A673 (cell line): ENCODE measurements at regions of chr7 and their contacts with region 1.

Region 1: DNA sequence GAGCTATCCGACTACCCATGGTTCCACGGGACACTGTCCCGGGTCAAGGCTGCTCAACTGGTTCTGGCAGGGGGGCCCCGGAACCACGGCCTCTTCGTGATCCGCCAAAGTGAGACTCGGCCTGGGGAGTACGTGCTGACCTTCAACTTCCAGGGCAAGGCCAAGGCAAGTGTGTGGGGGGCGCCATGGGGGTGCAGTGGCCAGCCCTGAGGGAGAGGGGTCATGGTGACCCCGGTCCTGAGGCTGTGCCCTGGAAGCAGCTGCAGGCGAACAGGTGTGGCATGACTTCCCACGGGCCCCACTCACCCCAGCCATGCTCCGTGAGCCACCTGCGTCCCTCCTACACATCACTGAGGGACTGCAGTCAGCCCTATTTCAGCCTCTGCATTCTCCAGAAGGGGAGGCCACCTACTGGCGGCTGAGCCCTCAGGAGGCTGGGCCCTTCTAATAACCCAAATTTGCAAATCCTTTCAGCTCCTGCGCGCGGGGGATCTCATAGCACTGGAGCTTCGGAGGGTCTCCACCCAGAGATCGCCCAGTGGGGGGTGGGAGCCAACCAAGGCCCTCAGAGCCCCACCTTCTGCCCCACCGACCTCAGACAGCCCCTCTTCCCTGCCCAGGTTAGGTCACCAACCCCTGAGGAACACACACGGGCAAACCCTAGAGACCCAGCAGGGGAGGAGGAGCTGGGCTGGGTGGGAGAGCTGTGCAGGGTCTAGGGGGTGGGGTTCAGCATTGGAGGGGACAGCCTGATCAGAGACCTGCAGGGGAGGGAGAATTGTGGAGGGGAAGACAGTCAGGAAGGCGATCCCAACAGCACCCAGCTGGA is 30.8 kb downstream of the SH2B2 start:
- DNase-seq: no peak
- H3K4me3 ChIP-seq: no peak overlapping the region
- H3K27ac ChIP-seq: no peak overlapping the region
- H3K4me1 ChIP-seq: no peaks in the 10 kb centered on the region
- H3K27me3 ChIP-seq: no peaks in the 10 kb centered on the region
- CTCF ChIP-seq: no peak

Region 2: DNA sequence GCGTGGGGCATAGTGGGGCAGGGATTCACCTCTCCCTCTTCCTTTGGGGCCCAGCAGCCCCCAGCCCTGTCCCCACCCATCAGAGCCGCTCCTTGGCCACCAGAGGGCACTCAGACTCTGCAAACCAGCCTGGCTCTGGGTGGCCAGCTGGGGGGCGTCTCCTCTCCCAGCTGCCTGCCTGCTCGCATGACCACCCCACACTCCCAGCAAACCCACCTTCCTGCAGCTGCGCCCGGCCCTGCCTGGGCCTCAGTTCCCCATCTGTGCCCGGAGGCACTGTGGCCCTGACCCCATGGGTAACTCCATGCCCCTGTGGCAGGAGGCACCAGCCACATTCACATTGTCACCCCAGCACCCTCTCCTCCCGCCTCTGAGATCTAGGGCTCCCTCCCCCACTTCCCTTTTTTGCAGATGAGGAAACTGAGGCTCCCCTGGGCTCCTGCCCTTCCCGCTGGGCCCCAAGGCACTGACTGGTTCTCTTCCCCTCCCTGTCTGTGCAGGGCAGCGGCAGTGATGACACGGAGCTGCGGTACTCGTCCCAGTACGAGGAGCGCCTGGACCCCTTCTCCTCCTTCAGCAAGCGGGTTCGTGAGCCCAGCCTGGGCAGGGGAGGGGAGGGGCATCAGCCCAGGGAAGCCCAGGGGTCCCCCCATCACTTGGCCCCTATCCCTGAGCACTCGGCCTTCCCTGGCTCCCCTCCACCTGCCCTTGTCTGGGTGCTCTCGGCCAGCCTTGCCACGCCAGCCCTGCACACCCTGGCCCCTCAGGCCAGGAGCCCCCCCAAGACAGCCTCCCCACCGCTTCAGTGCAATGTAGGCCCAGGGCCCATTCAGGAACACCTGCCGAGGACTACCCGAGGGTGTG is 37.7 kb before region 1 on chr7:
- CTCF ChIA-PET with region 1: no interaction called
- POLR2A ChIA-PET with region 1: no interaction called
- intact Hi-C with region 1: no loop called
- DNase-seq: peak; percentile 85
- H3K4me3 ChIP-seq: no peak overlapping the region
- H3K27ac ChIP-seq: no peak overlapping the region
- H3K4me1 ChIP-seq: no peaks in the 10 kb centered on the region
- H3K27me3 ChIP-seq: no peaks in the 10 kb centered on the region
- CTCF ChIP-seq: peak; percentile 93

Region 3: GRCh38 chr7:102297487-102298218 is 19.8 kb before region 1 on chr7:
- CTCF ChIA-PET with region 1: no interaction called
- POLR2A ChIA-PET with region 1: interaction called, 12 read pairs
- intact Hi-C with region 1: no loop called
- DNase-seq: no peak
- H3K4me3 ChIP-seq: no peak overlapping the region
- H3K27ac ChIP-seq: no peak overlapping the region
- H3K4me1 ChIP-seq: peaks cover 3% of the 10 kb centered on the region
- H3K27me3 ChIP-seq: no peaks in the 10 kb centered on the region
- CTCF ChIP-seq: no peak